ENCODE measurements at regions of chr10 and their contacts with region 1.

Region 1: GRCh38 chr10:102917962-102918816 is at the start of gene CNNM2:
- DNase-seq: peak; percentile 100
- H3K4me3 Mint-ChIP-seq: peak within 1 kb of the TSS; percentile 90
- H3K27ac Mint-ChIP-seq: peak within 1 kb of the TSS; percentile 84
- H3K4me1 Mint-ChIP-seq: peaks cover 45% of the 10 kb centered on the region
- H3K27me3 Mint-ChIP-seq: peaks cover 4% of the 10 kb centered on the region
- total RNA-seq, gene CNNM2: 4.0 to 4.2 TPM

Region 2: GRCh38 chr10:102334101-102334500 is 584.1 kb before region 1 on chr10:
- CTCF ChIA-PET with region 1: no interaction called
- POLR2A ChIA-PET with region 1: no interaction called
- intact Hi-C with region 1: no loop called
- DNase-seq: no peak
- H3K4me3 Mint-ChIP-seq: no peak overlapping the region
- H3K27ac Mint-ChIP-seq: no peak overlapping the region
- H3K4me1 Mint-ChIP-seq: peaks cover 24% of the 10 kb centered on the region
- H3K27me3 Mint-ChIP-seq: no peaks in the 10 kb centered on the region

Region 3: DNA sequence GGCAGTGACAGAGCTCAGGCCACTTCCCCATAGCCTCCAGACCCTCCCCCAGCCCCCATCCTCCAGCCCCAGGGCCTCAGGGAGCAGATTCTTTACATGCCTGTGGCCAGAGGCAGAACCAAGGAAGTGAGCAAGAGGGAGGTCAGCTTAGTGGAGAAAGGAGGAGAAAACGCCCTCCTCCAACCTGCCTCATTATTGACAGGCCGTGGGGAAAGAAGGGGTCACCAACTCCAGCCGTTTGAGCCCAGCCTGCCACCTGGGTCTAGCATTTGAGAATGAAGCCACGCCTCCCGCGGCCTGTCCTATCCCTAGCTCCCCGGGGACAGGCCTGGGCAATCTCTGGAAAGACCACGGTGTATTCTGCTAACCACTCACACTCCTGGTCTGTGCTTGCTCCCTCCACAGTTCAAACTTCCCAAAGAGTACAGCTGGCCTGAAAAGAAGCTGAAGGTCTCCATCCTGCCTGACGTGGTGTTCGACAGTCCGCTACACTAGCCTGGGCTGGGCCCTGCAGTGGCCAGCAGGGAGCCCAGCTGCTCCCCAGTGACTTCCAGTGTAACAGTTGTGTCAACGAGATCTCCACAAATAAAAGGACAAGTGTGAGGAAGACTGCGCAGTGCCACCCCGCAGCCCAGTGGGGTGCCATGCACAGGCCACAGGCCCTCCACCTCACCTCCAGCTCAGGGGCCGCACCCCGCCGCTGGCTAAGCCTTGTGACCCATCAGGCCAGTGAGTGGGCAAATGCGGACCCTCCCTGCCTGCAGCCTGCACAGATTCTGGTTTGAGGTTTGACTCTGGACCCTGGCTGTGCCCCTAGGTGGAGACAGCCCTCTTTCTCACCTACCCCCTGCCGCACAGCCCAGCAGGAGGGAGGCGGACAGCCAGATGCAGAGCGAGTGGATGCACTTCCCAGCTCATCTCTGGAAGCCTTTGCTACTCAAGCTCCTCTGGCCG is 288.3 kb before region 1 on chr10:
- CTCF ChIA-PET with region 1: no interaction called
- POLR2A ChIA-PET with region 1: no interaction called
- intact Hi-C with region 1: no loop called
- DNase-seq: no peak
- H3K4me3 Mint-ChIP-seq: no peak overlapping the region
- H3K27ac Mint-ChIP-seq: no peak overlapping the region
- H3K4me1 Mint-ChIP-seq: peaks cover 34% of the 10 kb centered on the region
- H3K27me3 Mint-ChIP-seq: no peaks in the 10 kb centered on the region

Region 4: DNA sequence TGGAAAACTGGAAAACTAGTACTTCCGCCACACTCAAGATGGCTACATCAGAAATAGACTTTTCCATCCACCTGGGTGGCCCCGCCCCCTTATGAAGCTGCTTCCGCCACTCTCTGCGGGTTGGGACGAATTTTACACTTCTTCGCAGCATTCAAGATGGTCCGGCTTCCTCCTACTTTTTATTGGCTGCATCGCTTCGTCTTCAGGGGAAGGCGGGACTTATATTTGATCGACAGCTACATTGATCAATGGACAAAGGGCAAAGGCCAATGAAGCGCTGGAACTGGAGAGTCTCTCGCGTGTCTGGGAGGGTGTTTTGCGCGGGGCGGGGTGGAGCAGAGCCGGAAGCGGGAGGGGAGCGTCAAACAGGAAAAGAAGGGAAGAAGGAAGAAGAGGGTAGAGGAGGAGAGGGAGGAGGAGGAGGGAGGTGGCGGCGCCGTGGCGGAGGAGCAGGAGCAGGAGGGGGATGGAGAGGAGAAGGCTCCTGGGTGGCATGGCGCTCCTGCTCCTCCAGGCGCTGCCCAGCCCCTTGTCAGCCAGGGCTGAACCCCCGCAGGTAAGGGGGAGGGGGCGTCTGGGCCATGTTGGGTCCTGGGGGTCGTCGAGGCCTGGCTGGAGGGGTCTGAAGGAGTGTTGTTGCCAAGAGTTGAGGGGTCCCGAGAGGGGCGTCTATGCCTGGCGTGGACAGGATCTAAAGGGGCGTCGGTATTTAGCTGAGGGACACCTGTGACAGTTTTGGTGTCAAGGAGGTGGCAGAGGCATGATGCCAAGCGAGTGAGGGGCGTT is 174.4 kb before region 1 on chr10 and contains the start of gene WBP1L:
- CTCF ChIA-PET with region 1: interaction called, 3 read pairs
- POLR2A ChIA-PET with region 1: interaction called, 4 read pairs
- intact Hi-C with region 1: loop called (anchors 10 kb)
- DNase-seq: peak; percentile 97
- H3K4me3 Mint-ChIP-seq: peak within 1 kb of the TSS; percentile 98
- H3K27ac Mint-ChIP-seq: peak within 1 kb of the TSS; percentile 67
- H3K4me1 Mint-ChIP-seq: peaks cover 41% of the 10 kb centered on the region
- H3K27me3 Mint-ChIP-seq: no peaks in the 10 kb centered on the region
- total RNA-seq, gene WBP1L: 14.6 to 15.9 TPM

Region 5: DNA sequence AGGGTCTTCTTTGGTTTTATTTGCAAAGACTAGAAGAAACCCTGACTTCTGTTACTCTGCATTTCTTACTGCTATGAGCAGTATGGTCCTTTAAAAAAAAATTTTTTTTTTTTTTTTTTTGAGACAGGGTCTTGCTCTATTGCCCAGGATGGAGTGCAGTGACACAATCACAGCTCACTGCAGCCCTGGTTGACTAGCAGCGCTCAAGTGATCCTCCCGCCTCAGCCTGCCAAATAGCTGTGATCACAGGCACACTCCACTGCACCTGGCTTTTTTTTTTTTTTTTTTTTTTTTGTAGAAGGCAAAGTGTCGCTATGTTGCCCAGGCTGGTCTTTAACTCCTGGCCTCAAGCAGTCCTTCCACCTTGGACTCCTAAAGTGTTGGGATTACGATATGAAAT is 17.3 kb after region 1 on chr10:
- CTCF ChIA-PET with region 1: interaction called, 10 read pairs
- POLR2A ChIA-PET with region 1: interaction called, 3 read pairs
- intact Hi-C with region 1: loop called (anchors 1 kb)
- DNase-seq: peak; percentile 14
- H3K4me3 Mint-ChIP-seq: no peak overlapping the region
- H3K27ac Mint-ChIP-seq: peak overlapping the region; percentile 88
- H3K4me1 Mint-ChIP-seq: peaks cover 19% of the 10 kb centered on the region
- H3K27me3 Mint-ChIP-seq: no peaks in the 10 kb centered on the region

Region 6: GRCh38 chr10:103062604-103063590 is 144.7 kb after region 1 on chr10:
- CTCF ChIA-PET with region 1: interaction called, 108 read pairs
- POLR2A ChIA-PET with region 1: no interaction called
- intact Hi-C with region 1: no loop called
- DNase-seq: no peak
- H3K4me3 Mint-ChIP-seq: no peak overlapping the region
- H3K27ac Mint-ChIP-seq: no peak overlapping the region
- H3K4me1 Mint-ChIP-seq: no peaks in the 10 kb centered on the region
- H3K27me3 Mint-ChIP-seq: no peaks in the 10 kb centered on the region

Region 7: GRCh38 chr10:103244663-103245271 is 326.6 kb after region 1 on chr10:
- CTCF ChIA-PET with region 1: interaction called, 42 read pairs
- POLR2A ChIA-PET with region 1: no interaction called
- intact Hi-C with region 1: loop called (anchors 1 kb)
- DNase-seq: peak; percentile 77
- H3K4me3 Mint-ChIP-seq: no peak overlapping the region
- H3K27ac Mint-ChIP-seq: no peak overlapping the region
- H3K4me1 Mint-ChIP-seq: peaks cover 9% of the 10 kb centered on the region
- H3K27me3 Mint-ChIP-seq: no peaks in the 10 kb centered on the region

Region 8: GRCh38 chr10:103481974-103482531 is 563.9 kb after region 1 on chr10:
- CTCF ChIA-PET with region 1: interaction called, 10 read pairs
- POLR2A ChIA-PET with region 1: no interaction called
- intact Hi-C with region 1: loop called (anchors 5 kb)
- DNase-seq: no peak
- H3K4me3 Mint-ChIP-seq: no peak overlapping the region
- H3K27ac Mint-ChIP-seq: no peak overlapping the region
- H3K4me1 Mint-ChIP-seq: peaks cover 4% of the 10 kb centered on the region
- H3K27me3 Mint-ChIP-seq: no peaks in the 10 kb centered on the region

Measured in activated CD4-positive, alpha-beta memory T cell treated with anti-CD3 and anti-CD28 coated beads for 36 hours (primary cell).